Activated CD8-positive, alpha-beta memory T cell treated with anti-CD3 and anti-CD28 coated beads, Interleukin-2, amount 10 ng/mL, durations not matched to agents 7 days and 5 days (primary cell): ENCODE measurements at regions of chr11 and their contacts with region 1.

Region 1: DNA sequence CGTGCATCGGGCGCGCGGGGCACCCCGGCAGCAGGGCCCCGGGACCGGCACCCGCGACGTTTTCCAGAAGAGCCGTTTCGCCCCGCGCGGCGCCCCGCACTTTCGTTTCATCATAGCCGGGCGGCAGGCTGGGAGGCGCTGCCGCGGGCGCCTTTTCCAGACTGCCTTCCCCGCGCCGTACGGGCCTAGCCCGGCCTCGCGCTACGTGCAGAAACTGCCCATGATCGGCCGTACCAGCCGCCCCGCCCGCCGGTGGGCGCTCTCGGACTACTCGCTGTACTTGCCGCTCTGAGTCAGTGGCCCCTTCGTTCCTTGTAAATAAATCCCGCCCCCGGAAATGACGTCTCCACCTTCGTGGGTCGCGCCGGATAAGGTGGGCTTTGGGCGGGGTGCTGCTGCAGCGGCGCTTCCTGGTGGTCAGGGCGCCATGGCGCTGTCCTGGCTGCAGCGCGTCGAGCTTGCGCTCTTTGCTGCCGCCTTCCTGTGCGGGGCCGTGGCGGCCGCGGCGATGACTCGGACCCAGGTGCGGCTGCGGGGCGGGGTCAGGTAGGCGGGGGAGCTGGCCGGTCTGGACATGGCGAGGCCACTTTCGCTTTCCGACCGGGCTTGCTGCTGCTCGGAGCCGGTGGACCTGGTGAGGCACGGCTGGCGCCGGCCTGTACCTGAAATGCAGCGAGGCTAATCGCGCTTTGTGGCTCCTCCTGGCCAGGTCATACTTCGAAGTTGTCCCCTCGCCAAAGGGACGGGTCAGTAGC is at the start of gene TMEM179B:
- DNase-seq: peak; percentile 99
- ATAC-seq: peak; percentile 71
- H3K4me3 Mint-ChIP-seq: peak within 1 kb of the TSS; percentile 95
- H3K27ac Mint-ChIP-seq: peak within 1 kb of the TSS; percentile 97
- H3K4me1 Mint-ChIP-seq: peaks cover 45% of the 10 kb centered on the region
- H3K27me3 Mint-ChIP-seq: no peaks in the 10 kb centered on the region
- total RNA-seq, gene TMEM179B: 42.4 to 43.0 TPM

Region 2: GRCh38 chr11:62612366-62613290 is 174.6 kb before region 1 on chr11 and contains the starts of genes EML3 and ROM1:
- CTCF ChIA-PET with region 1: interaction called, 10 read pairs
- DNase-seq: peak; percentile 95
- ATAC-seq: peak; percentile 83
- H3K4me3 Mint-ChIP-seq: peak within 1 kb of the TSS; percentile 100
- H3K27ac Mint-ChIP-seq: peak within 1 kb of the TSS; percentile 99
- H3K4me1 Mint-ChIP-seq: peaks cover 48% of the 10 kb centered on the region
- H3K27me3 Mint-ChIP-seq: no peaks in the 10 kb centered on the region
- total RNA-seq, gene EML3: 132 to 133 TPM
- total RNA-seq, gene ROM1: 1.1 to 1.5 TPM

Region 3: GRCh38 chr11:62715150-62716135 is 71.7 kb before region 1 on chr11:
- CTCF ChIA-PET with region 1: no interaction called
- DNase-seq: no peak
- ATAC-seq: no peak
- H3K4me3 Mint-ChIP-seq: no peak overlapping the region
- H3K27ac Mint-ChIP-seq: peak overlapping the region; percentile 45
- H3K4me1 Mint-ChIP-seq: peaks cover 79% of the 10 kb centered on the region
- H3K27me3 Mint-ChIP-seq: no peaks in the 10 kb centered on the region

Region 4: DNA sequence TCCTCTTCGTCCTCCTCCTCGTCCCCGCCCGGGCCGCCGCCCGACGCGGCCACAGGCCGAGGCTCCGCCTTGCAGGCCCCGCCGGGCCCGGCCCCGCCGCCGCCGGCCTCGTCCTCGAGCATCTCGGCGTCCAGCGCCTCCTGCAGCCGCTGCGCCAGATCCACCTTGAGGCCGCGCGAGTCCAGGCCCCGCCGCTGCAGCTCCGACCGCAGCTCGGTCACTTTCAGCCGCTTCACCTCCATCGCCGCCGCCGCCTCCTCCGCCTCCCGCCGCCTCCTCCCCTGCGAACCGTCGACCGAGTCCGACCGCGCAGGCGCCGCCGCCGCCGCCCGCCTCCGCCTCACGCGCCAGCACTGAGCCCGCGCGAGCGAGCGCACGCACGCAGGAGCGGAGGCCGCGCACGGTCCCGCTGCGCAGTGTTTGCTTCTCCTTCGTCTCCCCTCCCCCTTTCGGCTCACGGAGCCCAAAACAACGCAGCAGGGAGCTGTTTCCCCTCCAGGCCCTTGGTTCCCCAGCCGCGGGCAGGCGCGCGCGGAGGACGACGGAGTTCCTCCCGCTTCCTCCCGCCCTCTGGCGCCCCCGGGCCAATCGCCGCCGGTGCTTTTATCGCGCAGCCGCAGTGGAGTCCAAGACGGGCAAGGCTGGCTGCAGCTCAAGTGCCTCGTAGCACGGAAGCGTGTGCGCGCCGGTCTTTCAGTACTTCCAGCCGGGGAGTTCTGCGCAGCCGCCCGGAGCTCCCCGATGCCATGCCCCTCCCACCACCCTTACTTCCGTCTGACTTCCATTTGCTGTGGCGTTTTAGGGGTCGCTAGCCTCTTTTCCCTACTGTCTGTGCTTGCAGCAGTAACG is 60.0 kb before region 1 on chr11 and contains the start of gene HNRNPUL2:
- CTCF ChIA-PET with region 1: interaction called, 12 read pairs
- DNase-seq: peak; percentile 99
- ATAC-seq: peak; percentile 86
- H3K4me3 Mint-ChIP-seq: peak within 1 kb of the TSS; percentile 94
- H3K27ac Mint-ChIP-seq: peak within 1 kb of the TSS; percentile 98
- H3K4me1 Mint-ChIP-seq: peaks cover 50% of the 10 kb centered on the region
- H3K27me3 Mint-ChIP-seq: no peaks in the 10 kb centered on the region
- total RNA-seq, gene HNRNPUL2: 61.6 to 66.6 TPM

Region 5: DNA sequence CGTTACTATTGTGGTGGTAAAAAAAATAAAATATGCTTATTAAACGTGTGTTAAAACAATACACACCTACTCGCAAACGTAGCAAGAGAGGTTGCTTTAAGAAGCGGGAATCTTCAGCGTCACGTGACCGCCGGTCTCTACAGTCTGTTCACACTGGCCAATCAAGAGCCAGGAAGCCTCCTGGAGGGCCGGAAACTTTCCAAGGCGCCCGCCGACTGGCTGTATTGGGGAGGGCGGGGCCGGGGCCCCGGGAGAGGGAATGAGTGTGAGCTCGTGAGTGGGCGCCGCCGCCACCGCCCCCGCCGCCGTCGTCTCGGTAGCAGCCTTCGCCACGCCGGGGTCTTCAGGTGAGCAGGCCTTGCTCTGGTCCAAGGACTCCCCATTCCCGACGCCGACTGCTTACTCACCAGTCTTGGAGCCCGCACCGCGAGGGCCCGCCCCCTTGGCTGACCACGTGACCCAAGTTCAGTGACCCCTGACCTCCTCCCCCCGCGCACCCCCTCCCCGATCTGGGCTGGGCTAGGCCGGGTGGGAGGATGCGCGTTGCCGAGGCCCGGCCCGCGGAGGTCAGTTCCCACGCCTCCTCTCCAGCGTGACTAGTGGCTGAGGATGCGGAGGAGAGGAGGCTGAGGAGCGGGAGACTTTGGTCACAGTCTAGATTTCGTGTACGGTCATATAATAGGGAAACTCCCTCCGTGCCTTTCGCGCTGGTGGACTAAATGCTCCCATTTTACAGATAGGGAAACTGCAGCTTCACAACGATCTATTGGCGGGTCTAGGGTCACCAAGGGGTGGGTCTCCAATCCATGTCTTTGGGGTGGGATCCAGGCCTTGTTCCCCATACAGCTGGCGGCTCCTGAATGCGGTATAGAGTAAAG is 15.8 kb before region 1 on chr11 and contains the start of gene TAF6L:
- CTCF ChIA-PET with region 1: interaction called, 242 read pairs
- DNase-seq: peak; percentile 97
- ATAC-seq: peak; percentile 89
- H3K4me3 Mint-ChIP-seq: peak within 1 kb of the TSS; percentile 88
- H3K27ac Mint-ChIP-seq: peak within 1 kb of the TSS; percentile 95
- H3K4me1 Mint-ChIP-seq: peaks cover 32% of the 10 kb centered on the region
- H3K27me3 Mint-ChIP-seq: no peaks in the 10 kb centered on the region
- total RNA-seq, gene TAF6L: 23.5 to 25.0 TPM

Region 6: GRCh38 chr11:62823677-62824076 is 36.5 kb after region 1 on chr11:
- CTCF ChIA-PET with region 1: interaction called, 28 read pairs
- DNase-seq: no peak
- ATAC-seq: no peak
- H3K4me3 Mint-ChIP-seq: no peak overlapping the region
- H3K27ac Mint-ChIP-seq: peak overlapping the region; percentile 2
- H3K4me1 Mint-ChIP-seq: peaks cover 13% of the 10 kb centered on the region
- H3K27me3 Mint-ChIP-seq: no peaks in the 10 kb centered on the region

Region 7: DNA sequence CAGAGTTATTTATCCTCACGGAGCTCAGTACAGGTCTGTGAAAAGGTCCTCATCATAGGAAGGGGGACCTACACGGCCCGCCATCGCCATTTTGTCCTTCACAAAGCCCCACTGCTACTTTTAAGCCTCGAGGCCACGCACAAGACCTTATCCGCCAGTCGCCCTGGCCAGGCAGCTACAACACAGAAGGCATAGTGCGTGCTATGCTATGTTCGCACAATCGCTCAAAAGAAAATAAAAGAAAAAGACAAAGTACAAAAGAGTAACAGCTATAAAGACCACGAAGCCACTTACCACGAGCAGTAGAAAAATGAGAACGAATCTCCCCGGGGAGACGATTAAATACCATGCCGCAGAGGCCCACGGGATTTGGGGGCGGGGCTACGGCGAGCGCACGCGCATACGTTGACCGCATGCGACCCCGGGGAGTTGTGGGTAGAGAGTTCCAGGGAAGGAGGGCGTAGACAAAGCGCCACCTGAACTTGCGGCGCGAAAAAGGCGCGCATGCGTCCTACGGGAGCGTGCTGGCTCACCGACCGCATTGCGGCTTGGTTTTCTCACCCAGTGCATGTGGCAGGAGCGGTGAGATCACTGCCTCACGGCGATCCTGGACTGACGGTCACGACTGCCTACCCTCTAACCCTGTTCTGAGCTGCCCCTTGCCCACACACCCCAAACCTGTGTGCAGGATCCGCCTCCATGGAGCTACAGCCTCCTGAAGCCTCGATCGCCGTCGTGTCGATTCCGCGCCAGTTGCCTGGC is 68.6 kb after region 1 on chr11:
- CTCF ChIA-PET with region 1: interaction called, 74 read pairs
- DNase-seq: peak; percentile 99
- ATAC-seq: peak; percentile 86
- H3K4me3 Mint-ChIP-seq: peak overlapping the region; percentile 93
- H3K27ac Mint-ChIP-seq: peak overlapping the region; percentile 91
- H3K4me1 Mint-ChIP-seq: peaks cover 68% of the 10 kb centered on the region
- H3K27me3 Mint-ChIP-seq: peaks cover 3% of the 10 kb centered on the region